A673 (cell line): ENCODE measurements at regions of chr12 and their contacts with region 1.

Region 1: GRCh38 chr12:93378373-93379325 is 924 bp downstream of the NUDT4 start:
- DNase-seq: peak; percentile 70
- H3K4me3 ChIP-seq: peak overlapping the region; percentile 89
- H3K27ac ChIP-seq: peak overlapping the region; percentile 81
- H3K4me1 ChIP-seq: peaks cover 28% of the 10 kb centered on the region
- H3K27me3 ChIP-seq: no peaks in the 10 kb centered on the region
- CTCF ChIP-seq: no peak

Region 2: GRCh38 chr12:92582475-92582874 is 796.2 kb before region 1 on chr12:
- CTCF ChIA-PET with region 1: no interaction called
- POLR2A ChIA-PET with region 1: no interaction called
- intact Hi-C with region 1: no loop called
- DNase-seq: no peak
- H3K4me3 ChIP-seq: no peak overlapping the region
- H3K27ac ChIP-seq: no peak overlapping the region
- H3K4me1 ChIP-seq: no peaks in the 10 kb centered on the region
- H3K27me3 ChIP-seq: no peaks in the 10 kb centered on the region
- CTCF ChIP-seq: no peak

Region 3: DNA sequence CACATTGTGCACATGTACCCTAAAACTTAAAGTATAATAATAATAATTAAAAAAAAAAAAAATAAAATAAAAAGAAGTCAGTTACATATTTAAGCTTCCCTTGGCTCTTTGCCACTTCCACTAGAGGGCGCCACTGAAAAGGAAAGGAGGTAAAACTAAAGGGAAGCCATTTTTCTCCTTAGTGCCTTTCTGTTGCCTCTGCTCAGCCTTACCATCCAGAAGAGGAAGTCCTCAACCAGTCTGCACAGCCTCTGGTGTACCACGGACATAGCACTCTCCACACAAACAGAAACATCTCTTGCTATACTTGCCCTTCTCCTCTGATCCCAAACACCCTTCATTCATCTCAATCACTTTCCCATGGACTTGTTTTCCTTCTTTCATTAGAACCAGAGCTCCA is 280.6 kb before region 1 on chr12:
- CTCF ChIA-PET with region 1: no interaction called
- POLR2A ChIA-PET with region 1: no interaction called
- intact Hi-C with region 1: loop called (anchors 5 kb)
- DNase-seq: peak; percentile 79
- H3K4me3 ChIP-seq: no peak overlapping the region
- H3K27ac ChIP-seq: no peak overlapping the region
- H3K4me1 ChIP-seq: peaks cover 23% of the 10 kb centered on the region
- H3K27me3 ChIP-seq: no peaks in the 10 kb centered on the region
- CTCF ChIP-seq: peak; percentile 65

Region 4: DNA sequence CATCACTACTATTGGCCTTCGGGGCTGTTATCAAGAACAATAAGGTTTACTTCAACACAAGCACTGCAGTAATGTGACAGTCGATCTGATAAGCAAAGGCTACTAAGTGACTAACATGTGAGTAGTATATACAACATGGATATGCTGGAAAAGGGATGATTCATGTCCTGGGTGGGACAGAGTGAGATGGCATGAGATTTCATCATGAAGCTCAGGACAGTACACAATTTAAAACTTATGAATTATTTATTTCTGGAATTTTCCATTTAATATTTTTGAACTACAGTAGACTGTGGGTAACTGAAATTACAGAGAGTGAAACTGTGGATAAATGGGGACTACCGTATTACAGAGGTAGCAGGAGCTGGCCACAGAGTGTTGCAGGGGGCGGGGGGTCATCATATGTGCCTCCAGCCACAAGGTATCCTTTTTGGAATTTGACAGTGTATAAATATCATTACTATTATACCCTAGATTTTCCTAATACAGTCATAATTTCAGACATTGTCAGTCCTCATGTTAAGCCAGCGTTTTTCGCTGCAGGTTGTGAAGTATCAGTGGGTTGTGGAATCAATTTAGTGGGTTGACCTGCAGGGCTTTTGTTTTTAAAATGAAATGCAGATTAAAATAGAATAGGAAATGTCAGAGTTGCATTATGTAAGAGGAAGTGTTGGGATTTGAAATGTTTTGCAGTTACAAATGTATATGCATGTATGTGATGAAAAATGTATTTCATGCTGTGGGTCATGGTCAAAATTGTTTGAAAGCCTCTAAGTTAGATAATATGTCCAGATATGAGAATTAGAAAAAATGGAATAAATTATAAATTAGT is 148.9 kb before region 1 on chr12:
- CTCF ChIA-PET with region 1: no interaction called
- POLR2A ChIA-PET with region 1: no interaction called
- intact Hi-C with region 1: loop called (anchors 10 kb)
- DNase-seq: peak; percentile 73
- H3K4me3 ChIP-seq: no peak overlapping the region
- H3K27ac ChIP-seq: peak overlapping the region; percentile 78
- H3K4me1 ChIP-seq: peaks cover 14% of the 10 kb centered on the region
- H3K27me3 ChIP-seq: no peaks in the 10 kb centered on the region
- CTCF ChIP-seq: no peak

Region 5: DNA sequence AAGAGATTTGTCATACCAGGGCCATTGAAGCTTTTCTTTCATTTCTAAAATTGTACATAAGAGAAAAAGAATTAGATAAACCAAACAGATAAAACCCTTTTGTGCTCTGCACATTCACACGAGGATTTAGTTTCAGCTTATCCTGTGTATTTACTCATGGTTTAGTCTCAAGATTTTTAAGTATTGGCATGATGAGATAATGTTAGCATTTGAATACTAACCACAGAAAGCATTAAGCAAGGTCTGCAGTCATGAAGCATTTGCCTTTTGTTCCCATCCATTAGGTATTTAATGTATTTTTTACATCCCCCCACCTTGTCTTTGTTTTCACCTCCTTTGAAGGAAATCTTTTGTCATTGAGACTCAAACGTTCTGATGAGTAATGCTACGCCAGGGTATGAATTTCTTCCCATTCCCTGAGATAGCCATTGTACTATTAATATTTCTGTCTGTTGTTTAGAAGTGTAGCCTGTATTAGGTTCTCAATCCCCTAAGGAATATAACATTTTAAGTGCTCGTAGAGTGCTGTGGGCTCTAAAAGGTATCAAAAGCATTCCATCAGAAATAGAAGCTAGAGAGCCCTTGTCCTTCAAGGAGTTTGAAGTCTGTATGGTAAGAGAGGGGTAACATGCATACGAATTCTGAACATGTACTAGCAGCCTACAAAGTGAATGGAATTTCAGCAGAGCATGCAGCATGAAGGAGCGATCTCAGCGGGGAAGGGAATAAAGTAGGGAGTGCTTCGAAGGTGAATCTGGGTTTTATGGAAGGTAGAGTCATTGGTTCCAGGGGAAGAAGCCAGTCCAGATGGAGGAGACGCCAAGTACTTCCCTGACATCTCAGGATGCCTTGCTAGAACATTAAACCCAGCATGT is 320.9 kb after region 1 on chr12:
- CTCF ChIA-PET with region 1: no interaction called
- POLR2A ChIA-PET with region 1: no interaction called
- intact Hi-C with region 1: no loop called
- DNase-seq: peak; percentile 22
- H3K4me3 ChIP-seq: no peak overlapping the region
- H3K27ac ChIP-seq: no peak overlapping the region
- H3K4me1 ChIP-seq: peaks cover 4% of the 10 kb centered on the region
- H3K27me3 ChIP-seq: no peaks in the 10 kb centered on the region
- CTCF ChIP-seq: no peak